Activated CD8-positive, alpha-beta T cell treated with anti-CD3 and anti-CD28 coated beads for 36 hours (primary cell): ENCODE measurements at regions of chr19 and their contacts with region 1.

Region 1: GRCh38 chr19:40603389-40604135 is 2.4 kb downstream of the LTBP4 start:
- DNase-seq: peak; percentile 99
- ATAC-seq: peak; percentile 78
- H3K4me3 Mint-ChIP-seq: peak overlapping the region; percentile 77
- H3K27ac Mint-ChIP-seq: no peak overlapping the region
- H3K4me1 Mint-ChIP-seq: peaks cover 69% of the 10 kb centered on the region
- H3K27me3 Mint-ChIP-seq: peaks cover 28% of the 10 kb centered on the region
- CTCF ChIP-seq: no peak

Region 2: GRCh38 chr19:40549007-40549708 is 54.4 kb before region 1 on chr19:
- CTCF ChIA-PET with region 1: interaction called, 51 read pairs
- POLR2A ChIA-PET with region 1: interaction called, 3 read pairs
- intact Hi-C with region 1: no loop called
- DNase-seq: peak; percentile 87
- ATAC-seq: peak; percentile 99
- H3K4me3 Mint-ChIP-seq: no peak overlapping the region
- H3K27ac Mint-ChIP-seq: no peak overlapping the region
- H3K4me1 Mint-ChIP-seq: peaks cover 7% of the 10 kb centered on the region
- H3K27me3 Mint-ChIP-seq: peaks cover 34% of the 10 kb centered on the region
- CTCF ChIP-seq: peak; percentile 40

Region 3: DNA sequence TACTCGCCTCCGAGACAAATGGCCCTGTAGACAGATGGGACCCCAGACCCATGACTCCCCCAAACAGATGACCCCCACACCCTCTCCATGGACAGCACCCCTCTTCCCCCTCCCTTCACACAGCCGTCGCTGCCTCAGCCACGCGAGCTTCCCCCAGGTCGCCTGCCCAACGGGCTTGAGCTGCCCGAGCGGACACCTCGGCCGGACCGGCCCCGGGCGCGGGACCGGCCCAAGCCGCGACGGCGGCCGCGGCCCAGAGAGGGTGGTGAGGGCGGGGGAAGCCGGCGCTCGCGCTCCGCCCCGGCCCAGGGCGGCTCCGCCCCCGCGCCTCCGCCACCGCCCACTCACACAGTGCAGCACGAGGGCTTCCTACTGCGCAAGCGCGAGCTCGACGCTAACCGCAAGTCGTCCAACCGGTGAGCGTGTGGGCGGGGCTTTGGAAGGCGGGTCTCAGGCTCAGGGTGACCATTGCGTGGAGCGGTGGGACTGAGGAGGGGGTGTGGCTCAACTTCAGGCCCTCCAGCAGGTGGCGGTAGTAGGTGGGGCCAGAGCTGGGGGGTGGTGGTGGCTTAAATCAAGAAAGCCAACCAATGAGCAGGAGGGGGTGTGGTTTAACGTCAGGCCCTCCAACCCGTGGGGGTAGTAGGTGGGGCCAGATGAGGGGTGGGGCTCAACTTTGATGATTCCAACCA is 33.1 kb before region 1 on chr19:
- CTCF ChIA-PET with region 1: interaction called, 13 read pairs
- POLR2A ChIA-PET with region 1: interaction called, 7 read pairs
- intact Hi-C with region 1: no loop called
- DNase-seq: peak; percentile 98
- ATAC-seq: peak; percentile 96
- H3K4me3 Mint-ChIP-seq: peak overlapping the region; percentile 48
- H3K27ac Mint-ChIP-seq: peak overlapping the region; percentile 51
- H3K4me1 Mint-ChIP-seq: peaks cover 10% of the 10 kb centered on the region
- H3K27me3 Mint-ChIP-seq: peaks cover 28% of the 10 kb centered on the region
- CTCF ChIP-seq: no peak

Region 4: GRCh38 chr19:40777937-40778705 is 174.6 kb after region 1 on chr19 and contains the start of gene RAB4B:
- CTCF ChIA-PET with region 1: no interaction called
- POLR2A ChIA-PET with region 1: no interaction called
- intact Hi-C with region 1: no loop called
- DNase-seq: peak; percentile 100
- ATAC-seq: peak; percentile 77
- H3K4me3 Mint-ChIP-seq: peak within 1 kb of the TSS; percentile 92
- H3K27ac Mint-ChIP-seq: peak within 1 kb of the TSS; percentile 96
- H3K4me1 Mint-ChIP-seq: peaks cover 50% of the 10 kb centered on the region
- H3K27me3 Mint-ChIP-seq: no peaks in the 10 kb centered on the region
- CTCF ChIP-seq: no peak
- total RNA-seq, gene RAB4B: 39.7 to 42.3 TPM